ENCODE measurements at regions of chr3 and their contacts with region 1.

Region 1: GRCh38 chr3:164332831-164333802 is 745.2 kb downstream of the SI start:
- DNase-seq: no peak
- H3K4me3 ChIP-seq: no peak overlapping the region
- H3K27ac ChIP-seq: no peak overlapping the region
- H3K4me1 ChIP-seq: no peaks in the 10 kb centered on the region
- H3K27me3 ChIP-seq: no peaks in the 10 kb centered on the region
- CTCF ChIP-seq: no peak

Region 2: DNA sequence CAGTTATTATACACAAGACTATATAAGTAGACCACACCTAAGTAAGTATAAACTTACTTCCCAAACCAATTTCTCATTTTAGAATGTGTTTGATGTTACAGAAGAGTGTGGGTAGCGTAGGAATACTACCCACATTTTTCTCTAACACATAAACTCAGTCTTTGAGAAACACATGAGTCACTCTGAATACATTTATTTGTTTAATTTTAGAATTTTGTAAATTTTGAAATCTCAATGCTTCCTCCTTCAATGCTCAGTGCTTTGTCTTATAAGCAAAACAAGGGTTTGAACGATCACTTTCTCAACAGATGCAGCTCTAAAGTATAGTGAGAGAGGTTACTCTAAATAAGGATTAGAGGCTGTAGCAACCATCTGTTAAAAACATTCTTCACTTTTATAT is 44.3 kb after region 1 on chr3:
- CTCF ChIA-PET with region 1: no interaction called
- POLR2A ChIA-PET with region 1: no interaction called
- intact Hi-C with region 1: loop called (anchors 1 kb)
- DNase-seq: no peak
- H3K4me3 ChIP-seq: no peak overlapping the region
- H3K27ac ChIP-seq: no peak overlapping the region
- H3K4me1 ChIP-seq: no peaks in the 10 kb centered on the region
- H3K27me3 ChIP-seq: no peaks in the 10 kb centered on the region
- CTCF ChIP-seq: no peak

Measured in PC-9 (cell line).